Esophagus muscularis mucosa (tissue), 4 donors: ENCODE measurements at regions of chr19 and their contacts with region 1.

Region 1: DNA sequence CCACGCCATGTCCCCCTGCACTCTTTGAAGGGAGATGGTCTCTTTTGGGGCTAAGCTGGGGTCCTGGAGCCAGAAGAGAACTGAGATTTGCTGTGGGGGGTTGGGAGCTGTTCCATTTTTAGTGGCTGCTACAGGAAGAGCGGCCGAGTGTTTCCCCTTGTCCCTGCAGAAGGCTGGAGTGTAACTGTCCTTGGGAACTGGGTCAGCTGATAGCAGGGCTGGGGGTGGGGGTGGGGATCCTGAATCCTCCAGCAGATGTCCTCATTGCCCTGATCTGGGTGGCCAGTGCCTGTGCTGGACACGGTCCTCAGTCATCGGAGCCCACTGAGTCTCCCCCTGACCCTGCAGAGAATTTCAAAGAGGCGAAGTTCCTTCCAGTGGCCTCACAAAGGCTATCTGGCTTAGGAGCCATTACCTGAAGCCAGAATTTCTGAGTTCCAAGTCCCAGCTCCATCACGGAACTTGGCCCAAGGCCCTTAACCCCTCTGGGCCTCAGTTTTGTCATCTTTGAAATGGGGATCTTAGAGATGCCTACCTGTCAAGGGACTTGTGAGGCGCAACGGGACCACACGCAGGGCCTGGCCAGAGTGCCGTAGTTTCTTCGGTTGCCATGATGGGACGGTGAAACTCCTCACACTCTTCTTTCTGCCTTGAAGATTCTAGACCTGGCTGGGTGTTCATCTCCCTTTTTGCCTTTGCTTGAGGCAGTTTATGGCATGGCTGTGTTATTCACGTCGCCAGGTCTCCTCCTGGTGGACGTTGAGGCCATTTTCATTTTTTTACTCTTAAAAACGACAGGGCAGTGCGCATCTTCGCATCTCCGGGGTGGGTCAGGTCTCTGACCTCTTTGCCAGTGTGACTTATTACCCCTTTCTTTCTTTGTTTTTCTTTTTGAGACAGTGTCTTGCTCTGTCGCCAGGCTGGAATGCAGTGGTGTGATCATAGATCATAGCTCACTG is 51.9 kb downstream of the DNM2 start:
- DNase-seq: no peak
- H3K4me3 ChIP-seq: no peak overlapping the region
- H3K27ac ChIP-seq: peak overlapping the region; percentile 30 to 65 (median 46)
- H3K4me1 ChIP-seq: peaks cover 53 to 59% (median 55%) of the 10 kb centered on the region in 4 donors
- H3K27me3 ChIP-seq: no peaks in the 10 kb centered on the region
- CTCF ChIP-seq: peak in 2 of 3 experiments; percentile 26 to 32
- EP300 ChIP-seq: no peak
- POLR2A ChIP-seq: no peak

Region 2: DNA sequence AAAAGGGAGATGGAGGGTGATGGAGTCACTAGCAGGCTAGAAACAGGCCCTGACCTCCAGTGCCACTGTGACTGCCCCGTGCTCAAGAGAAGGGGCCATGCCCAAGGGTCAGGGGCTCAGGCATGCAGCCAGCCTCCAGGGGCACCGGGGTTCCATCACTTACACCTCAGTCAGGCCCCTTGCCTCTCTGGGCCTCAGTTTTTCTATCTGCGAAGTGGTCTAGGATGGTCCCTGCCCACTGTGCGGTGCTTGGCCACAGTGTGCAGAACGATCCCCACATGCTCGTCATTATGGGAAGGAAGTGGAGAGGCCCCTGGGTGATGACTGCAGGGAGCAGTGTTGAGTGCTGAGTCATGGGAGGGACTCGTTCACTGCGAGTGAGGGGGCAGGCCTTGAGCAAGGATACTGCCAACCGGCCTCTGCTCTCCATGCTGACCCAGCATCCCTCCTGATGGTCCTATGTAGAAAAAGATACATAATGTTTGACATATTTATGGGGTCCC is 43.1 kb after region 1 on chr19:
- intact Hi-C with region 1: no loop called
- DNase-seq: no peak
- H3K4me3 ChIP-seq: no peak overlapping the region
- H3K27ac ChIP-seq: peak overlapping the region; percentile 11 to 62 (median 36)
- H3K4me1 ChIP-seq: peaks cover 4 to 22% (median 14%) of the 10 kb centered on the region in 4 donors
- H3K27me3 ChIP-seq: no peaks in the 10 kb centered on the region
- CTCF ChIP-seq: no peak
- EP300 ChIP-seq: no peak
- POLR2A ChIP-seq: no peak

Region 3: DNA sequence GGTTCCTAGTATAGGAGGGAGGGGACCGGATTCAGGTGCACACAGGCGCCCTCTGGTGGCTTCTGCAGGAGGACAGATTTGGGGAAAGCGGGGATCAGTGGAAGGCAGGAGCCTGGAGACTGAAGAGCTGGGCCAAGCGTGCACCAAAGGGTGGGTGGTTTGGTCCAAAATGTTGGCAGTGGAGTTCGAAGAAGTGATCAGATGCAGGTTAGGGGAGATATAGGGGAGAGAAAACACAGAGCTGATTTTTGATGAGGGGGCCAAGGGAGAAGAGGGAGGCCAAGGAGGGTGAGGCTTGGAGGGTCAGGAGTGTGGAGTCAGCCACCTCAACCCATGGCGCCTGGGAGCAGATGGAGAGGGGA is 94.7 kb after region 1 on chr19:
- intact Hi-C with region 1: loop called (anchors 10 kb)
- DNase-seq: no peak
- H3K4me3 ChIP-seq: peak overlapping the region in 3 of 4 donors; percentile 7 to 13 (median 8)
- H3K27ac ChIP-seq: peak overlapping the region in 1 of 4 donors; percentile 48
- H3K4me1 ChIP-seq: peaks cover 0 to 11% (median 6%) of the 10 kb centered on the region in 4 donors
- H3K27me3 ChIP-seq: no peaks in the 10 kb centered on the region
- CTCF ChIP-seq: peak; percentile 76 to 90 (median 86)
- EP300 ChIP-seq: no peak
- POLR2A ChIP-seq: no peak

Region 4: DNA sequence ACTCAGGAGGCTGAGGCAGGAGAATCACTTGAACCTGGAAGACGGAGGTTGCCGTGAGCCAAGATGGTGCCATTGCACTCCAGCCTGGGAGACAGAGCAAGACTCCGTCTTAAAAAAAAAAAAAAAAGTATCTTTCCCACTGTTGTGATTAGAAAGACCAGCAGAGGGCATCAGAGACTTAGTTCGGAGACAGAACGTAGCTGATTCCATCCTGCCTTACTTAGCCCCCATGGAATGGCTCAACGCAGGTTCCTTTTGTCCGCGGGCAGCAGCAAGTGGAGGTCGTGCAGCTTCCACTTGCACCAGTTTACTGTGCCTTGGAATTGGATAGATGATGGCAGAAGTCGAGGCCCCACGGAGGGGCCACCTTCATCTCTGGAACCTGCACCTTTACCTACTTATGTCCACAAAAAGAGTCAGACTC is 166.9 kb after region 1 on chr19:
- intact Hi-C with region 1: no loop called
- DNase-seq: no peak
- H3K4me3 ChIP-seq: peak overlapping the region in 2 of 4 donors; percentile 13 to 14
- H3K27ac ChIP-seq: peak overlapping the region in 1 of 4 donors; percentile 26
- H3K4me1 ChIP-seq: peaks cover 0 to 12% (median 10%) of the 10 kb centered on the region in 4 donors
- H3K27me3 ChIP-seq: no peaks in the 10 kb centered on the region
- CTCF ChIP-seq: peak; percentile 54 to 66 (median 66)
- EP300 ChIP-seq: no peak
- POLR2A ChIP-seq: no peak

Region 5: DNA sequence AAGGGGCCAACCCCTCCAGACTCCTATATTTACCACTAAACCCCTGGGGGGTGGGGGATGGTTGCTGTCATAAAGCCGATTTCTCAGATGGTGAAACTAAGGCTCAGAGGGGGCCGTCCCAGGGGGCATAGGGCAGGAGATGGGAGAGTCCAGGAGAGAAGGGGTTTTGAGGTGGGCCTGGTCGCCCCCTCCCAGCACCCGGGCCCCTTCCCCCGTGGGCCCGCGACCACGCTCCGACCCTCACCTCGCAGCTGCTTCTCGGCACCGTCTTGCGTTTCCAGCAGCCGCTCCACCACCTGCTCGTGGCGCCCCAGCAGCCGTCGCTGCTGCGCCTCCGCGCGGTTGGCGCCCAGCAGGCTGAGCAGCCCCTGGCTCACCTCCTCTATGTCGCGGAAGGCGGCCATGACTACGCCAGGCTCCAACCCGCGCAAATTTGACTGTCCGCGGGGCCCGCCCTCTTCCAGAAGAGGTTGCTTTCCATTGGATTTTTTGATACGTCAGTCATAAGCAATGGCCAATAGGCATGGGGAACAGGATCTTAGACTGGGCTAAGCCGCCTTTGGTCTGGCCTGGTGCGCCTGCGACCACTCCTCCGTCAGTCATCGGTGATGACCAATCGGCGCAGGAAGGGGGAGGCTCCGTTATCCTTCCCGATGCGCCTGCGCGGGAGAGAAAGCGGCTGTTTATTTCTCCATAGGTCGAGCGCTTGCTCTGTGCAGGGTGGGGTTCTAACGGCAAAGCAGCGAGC is 385.7 kb after region 1 on chr19 and contains the start of gene SPC24:
- intact Hi-C with region 1: no loop called
- DNase-seq: peak; percentile 97
- H3K4me3 ChIP-seq: peak within 1 kb of the TSS; percentile 60 to 64 (median 64)
- H3K27ac ChIP-seq: peak within 1 kb of the TSS; percentile 89 to 92 (median 92)
- H3K4me1 ChIP-seq: peaks cover 68 to 95% (median 91%) of the 10 kb centered on the region in 4 donors
- H3K27me3 ChIP-seq: no peaks in the 10 kb centered on the region
- CTCF ChIP-seq: no peak
- EP300 ChIP-seq: no peak
- POLR2A ChIP-seq: no peak
- total RNA-seq, gene SPC24: 1.4 to 6.6 (median 3.4) TPM